ENCODE measurements at regions of chr5 and their contacts with region 1.

Region 1: DNA sequence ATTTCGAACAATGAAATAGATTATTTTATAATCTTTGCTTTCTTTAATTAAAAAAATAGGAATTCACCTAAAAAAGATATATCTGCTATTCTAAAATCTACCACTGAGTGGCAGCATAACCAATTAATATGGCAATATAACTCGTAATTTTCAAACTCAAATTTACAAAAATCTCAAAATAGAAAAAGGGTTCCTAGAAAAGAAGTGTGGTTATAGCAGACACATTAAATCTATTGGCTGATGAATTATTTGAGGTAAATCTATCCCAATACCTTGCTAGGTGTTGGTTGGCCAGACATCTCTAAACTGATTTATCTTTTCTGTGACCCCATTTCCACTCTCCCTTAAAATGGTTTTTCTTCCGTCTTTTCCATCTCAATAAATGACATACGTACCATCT is 30.2 kb upstream of the NRG2 start:
- DNase-seq: no peak
- H3K4me3 ChIP-seq: no peak overlapping the region
- H3K27ac ChIP-seq: no peak overlapping the region
- H3K4me1 ChIP-seq: no peaks in the 10 kb centered on the region
- H3K27me3 ChIP-seq: no peaks in the 10 kb centered on the region
- CTCF ChIP-seq: peak in 2 of 3 experiments; percentile 19 to 29

Region 2: DNA sequence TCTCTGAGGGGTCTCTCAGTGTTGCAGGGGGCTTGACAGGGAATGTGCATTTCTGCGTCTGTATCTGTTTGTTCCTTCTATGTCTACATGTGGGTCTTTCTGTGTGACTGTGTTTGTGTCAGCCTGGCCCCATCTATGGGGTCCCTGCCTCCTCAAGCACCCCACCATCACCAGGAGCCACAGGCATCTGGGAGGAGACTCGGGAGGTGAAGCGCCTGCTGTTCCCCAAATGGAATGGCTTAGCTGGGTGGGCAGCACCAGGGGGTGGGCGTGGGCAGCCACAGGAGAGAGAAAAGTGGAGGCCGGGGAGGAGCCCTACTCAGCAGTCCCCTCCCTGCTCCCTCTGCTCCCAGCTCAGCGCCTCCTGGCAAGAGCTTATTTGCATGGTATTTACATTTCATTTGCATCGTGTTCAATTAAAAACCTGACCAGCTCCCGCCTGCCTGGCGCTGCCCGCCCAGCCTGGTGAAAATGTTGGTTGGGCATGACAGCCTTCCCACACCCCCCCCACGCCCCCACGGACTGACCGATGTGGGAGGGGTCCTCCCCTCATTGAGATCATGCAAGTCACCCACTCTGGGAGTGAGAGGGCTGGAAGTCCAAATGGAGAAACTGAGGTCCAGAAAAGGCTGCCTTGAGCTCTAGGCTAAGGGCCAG is 374.7 kb before region 1 on chr5:
- dilution Hi-C with region 1: no loop called
- DNase-seq: no peak
- H3K4me3 ChIP-seq: no peak overlapping the region
- H3K27ac ChIP-seq: no peak overlapping the region
- H3K4me1 ChIP-seq: peaks cover 5% of the 10 kb centered on the region
- H3K27me3 ChIP-seq: peaks cover 14% of the 10 kb centered on the region
- CTCF ChIP-seq: no peak

Region 3: DNA sequence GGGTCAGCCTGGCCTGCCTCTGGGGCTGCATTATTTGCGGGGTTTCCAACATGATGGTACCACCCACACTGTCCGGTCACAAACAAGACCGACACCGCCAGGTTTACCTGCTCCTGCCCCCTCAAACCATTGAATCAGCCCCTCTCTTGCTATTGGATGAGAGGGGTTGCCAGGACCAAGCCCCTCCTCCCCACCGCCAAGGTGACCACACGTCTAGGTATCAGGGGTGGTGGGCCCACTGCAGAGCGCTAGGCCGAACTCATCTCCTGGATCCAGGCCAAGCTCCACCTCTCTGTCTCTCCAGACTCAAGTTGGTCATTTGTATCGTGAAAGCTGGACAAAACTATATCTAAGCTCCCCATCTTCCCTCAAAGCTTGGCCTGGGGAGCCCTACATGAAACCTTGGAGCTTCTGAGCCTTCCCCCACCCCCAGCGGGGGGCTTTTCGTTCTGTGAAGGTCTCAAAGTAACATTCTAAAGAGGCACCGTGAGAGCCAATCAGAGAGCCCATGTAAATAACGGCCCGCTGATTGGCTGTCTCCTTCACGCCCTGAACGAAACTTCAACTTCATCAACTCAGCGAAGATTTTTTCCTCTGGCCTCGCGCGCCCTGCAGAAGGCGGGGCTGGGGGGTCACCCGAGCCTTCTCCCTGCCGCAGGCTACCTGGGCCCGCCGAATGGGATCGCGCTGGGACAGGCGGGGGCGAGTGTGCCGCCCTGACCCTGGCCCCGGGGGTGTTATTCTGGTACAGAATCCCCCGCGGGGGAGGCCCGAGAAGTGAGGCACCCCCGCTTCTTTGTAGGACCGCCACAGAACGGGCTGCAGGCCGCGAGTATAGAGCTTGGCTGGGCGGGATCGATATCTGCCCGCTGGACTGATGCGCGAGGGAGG is 327.3 kb before region 1 on chr5:
- dilution Hi-C with region 1: no loop called
- DNase-seq: no peak
- H3K4me3 ChIP-seq: peak overlapping the region in 1 of 3 experiments; percentile 19
- H3K27ac ChIP-seq: no peak overlapping the region
- H3K4me1 ChIP-seq: peaks cover 16% of the 10 kb centered on the region
- H3K27me3 ChIP-seq: peaks cover 56% of the 10 kb centered on the region
- CTCF ChIP-seq: no peak

Region 4: GRCh38 chr5:140141241-140141640 is 67.9 kb after region 1 on chr5:
- dilution Hi-C with region 1: no loop called
- DNase-seq: no peak
- H3K4me3 ChIP-seq: no peak overlapping the region
- H3K27ac ChIP-seq: no peak overlapping the region
- H3K4me1 ChIP-seq: peaks cover 7% of the 10 kb centered on the region
- H3K27me3 ChIP-seq: no peaks in the 10 kb centered on the region
- CTCF ChIP-seq: no peak

Region 5: GRCh38 chr5:140157032-140157803 is 83.9 kb after region 1 on chr5:
- dilution Hi-C with region 1: loop called (anchors 25 kb)
- DNase-seq: no peak
- H3K4me3 ChIP-seq: no peak overlapping the region
- H3K27ac ChIP-seq: no peak overlapping the region
- H3K4me1 ChIP-seq: peaks cover 6% of the 10 kb centered on the region
- H3K27me3 ChIP-seq: no peaks in the 10 kb centered on the region
- CTCF ChIP-seq: peak; percentile 81 to 95 (median 84)

Region 6: DNA sequence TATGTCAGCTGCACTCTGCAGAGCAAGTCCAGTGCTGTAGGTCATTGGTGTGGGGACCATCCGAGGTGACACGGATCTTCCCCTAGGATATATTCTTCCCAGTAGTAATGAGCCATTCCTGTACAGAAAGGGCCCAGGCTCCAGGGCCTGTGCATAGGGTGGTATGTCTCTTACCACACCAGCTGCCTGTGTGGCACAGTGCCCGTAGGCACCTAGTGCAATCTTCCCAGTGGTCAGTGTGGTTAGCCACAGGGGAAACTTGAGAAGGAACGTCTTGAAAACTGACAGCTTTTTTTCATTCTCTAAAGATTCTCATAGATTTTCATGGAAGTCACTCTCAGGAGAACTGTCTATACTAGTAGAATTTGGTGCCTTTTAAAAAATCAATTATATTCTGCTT is 141.5 kb after region 1 on chr5:
- dilution Hi-C with region 1: no loop called
- DNase-seq: no peak
- H3K4me3 ChIP-seq: no peak overlapping the region
- H3K27ac ChIP-seq: no peak overlapping the region
- H3K4me1 ChIP-seq: peaks cover 16% of the 10 kb centered on the region
- H3K27me3 ChIP-seq: no peaks in the 10 kb centered on the region
- CTCF ChIP-seq: no peak

Measured in keratinocyte (primary cell).